ENCODE measurements at regions of chr14 and their contacts with region 1.

Region 1: GRCh38 chr14:69129264-69129880 is 23.5 kb downstream of the DCAF5 start:
- DNase-seq: peak; percentile 81 to 92 (median 88)
- H3K4me3 ChIP-seq: no peak overlapping the region
- H3K27ac ChIP-seq: no peak overlapping the region
- H3K4me1 ChIP-seq: peaks cover 0 to 12% (median 2%) of the 10 kb centered on the region in 4 experiments
- H3K27me3 ChIP-seq: no peaks in the 10 kb centered on the region

Region 2: GRCh38 chr14:68899033-68899603 is 230.3 kb before region 1 on chr14:
- CTCF ChIA-PET with region 1: no interaction called
- POLR2A ChIA-PET with region 1: no interaction called
- DNase-seq: peak in 2 of 3 donors; percentile 33 to 35
- H3K4me3 ChIP-seq: no peak overlapping the region
- H3K27ac ChIP-seq: peak overlapping the region in 1 of 2 experiments; percentile 30
- H3K4me1 ChIP-seq: peaks cover 0 to 47% (median 36%) of the 10 kb centered on the region in 4 experiments
- H3K27me3 ChIP-seq: no peaks in the 10 kb centered on the region

Region 3: GRCh38 chr14:69077841-69078240 is 51.5 kb before region 1 on chr14:
- CTCF ChIA-PET with region 1: no interaction called
- POLR2A ChIA-PET with region 1: no interaction called
- DNase-seq: no peak
- H3K4me3 ChIP-seq: no peak overlapping the region
- H3K27ac ChIP-seq: no peak overlapping the region
- H3K4me1 ChIP-seq: peaks cover 0 to 9% (median 2%) of the 10 kb centered on the region in 4 experiments
- H3K27me3 ChIP-seq: no peaks in the 10 kb centered on the region

Region 4: DNA sequence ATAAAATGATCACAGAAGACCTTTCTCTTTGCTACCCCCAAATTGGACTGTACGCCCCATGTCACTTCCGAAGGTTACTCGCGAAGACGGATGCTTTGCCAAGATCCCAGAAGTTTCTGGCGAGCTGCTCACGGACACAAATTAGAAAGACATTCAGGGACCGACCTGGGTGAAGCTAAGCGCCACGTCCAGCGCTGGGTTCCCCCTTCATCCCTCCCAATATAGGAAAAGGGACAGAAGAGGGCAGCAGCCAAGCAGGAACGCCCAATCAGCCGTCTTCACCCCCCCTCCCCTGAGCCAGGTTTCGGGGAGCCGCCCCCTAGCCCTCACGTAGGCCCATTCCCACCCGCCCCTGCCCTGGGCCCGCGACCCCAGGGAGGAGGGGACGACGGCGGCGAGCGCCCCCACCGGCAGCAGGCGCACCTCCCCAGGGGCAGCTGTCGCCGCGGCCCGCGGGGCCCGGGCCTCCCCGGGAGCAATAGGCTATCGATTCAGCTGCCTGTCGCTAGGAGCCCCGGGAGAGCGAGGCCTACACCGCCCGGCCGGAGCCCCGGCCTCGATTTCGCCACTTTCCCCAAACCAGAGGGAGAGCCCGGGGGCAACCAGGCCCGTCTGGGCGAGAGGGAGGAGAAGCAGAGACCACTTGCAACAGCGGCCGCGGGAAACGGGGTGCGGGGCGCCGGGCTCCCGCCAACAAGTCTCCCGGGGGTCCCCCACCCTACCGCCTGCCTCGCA is 22.1 kb after region 1 on chr14:
- CTCF ChIA-PET with region 1: interaction called, 14 read pairs
- POLR2A ChIA-PET with region 1: no interaction called
- DNase-seq: peak; percentile 91 to 94 (median 91)
- H3K4me3 ChIP-seq: peak overlapping the region; percentile 85 to 99 (median 91)
- H3K27ac ChIP-seq: peak overlapping the region; percentile 64 to 91
- H3K4me1 ChIP-seq: peaks cover 8 to 29% (median 26%) of the 10 kb centered on the region in 4 experiments
- H3K27me3 ChIP-seq: peaks cover 0 to 3% (median 0%) of the 10 kb centered on the region in 5 experiments